Tibial artery (tissue), 4 donors: ENCODE measurements at regions of chr4 and their contacts with region 1.

Region 1: GRCh38 chr4:158004101-158004500 is 168.7 kb downstream of the GASK1B start:
- DNase-seq: no peak
- H3K4me3 ChIP-seq: no peak overlapping the region
- H3K27ac ChIP-seq: no peak overlapping the region
- H3K4me1 ChIP-seq: peaks cover 0 to 36% (median 16%) of the 10 kb centered on the region in 4 donors
- H3K27me3 ChIP-seq: no peaks in the 10 kb centered on the region
- CTCF ChIP-seq: no peak

Region 2: DNA sequence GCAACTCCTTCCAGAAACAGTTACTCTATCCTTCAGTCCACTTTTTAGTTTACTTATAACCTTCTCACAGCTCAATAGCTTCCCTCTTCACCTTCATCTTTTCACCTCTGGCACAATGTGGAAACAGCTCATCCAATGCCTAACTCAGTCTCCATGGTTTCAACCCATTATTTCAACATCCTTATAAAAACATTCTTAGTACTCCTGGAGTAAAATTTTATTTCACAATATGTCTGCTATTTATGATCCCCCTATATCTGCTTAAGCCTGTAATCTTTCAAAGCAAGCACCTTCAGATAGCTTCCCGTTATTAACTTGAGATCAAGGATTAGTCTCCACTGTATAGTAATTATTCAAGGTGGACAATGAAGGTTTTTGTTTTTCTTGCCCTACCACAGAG is 12.4 kb after region 1 on chr4:
- intact Hi-C with region 1: loop called (anchors 1 kb)
- DNase-seq: no peak
- H3K4me3 ChIP-seq: no peak overlapping the region
- H3K27ac ChIP-seq: peak overlapping the region; percentile 49 to 64
- H3K4me1 ChIP-seq: peaks cover 0 to 55% (median 21%) of the 10 kb centered on the region in 4 donors
- H3K27me3 ChIP-seq: no peaks in the 10 kb centered on the region
- CTCF ChIP-seq: no peak